ENCODE measurements at regions of chr6 and their contacts with region 1.

Region 1: GRCh38 chr6:158026054-158026900 is 44.6 kb downstream of the SYNJ2 start:
- DNase-seq: peak; percentile 79
- H3K4me3 ChIP-seq: 0 out of 4 replicates have a peak overlapping the region, but pooled peaks of 1 of the 2 experiments have one; percentile 0
- H3K27ac ChIP-seq: peak overlapping the region; percentile 56 to 96
- H3K4me1 ChIP-seq: peaks cover 15 to 30% of the 10 kb centered on the region in 2 experiments; a peak in 3 of 4 replicates
- H3K27me3 ChIP-seq: no peaks in the 10 kb centered on the region
- CTCF ChIP-seq: peak; percentile 83
- EP300 ChIP-seq: peak in 1 of 2 experiments; percentile 97; a peak in 2 of 4 replicates
- RAD21 ChIP-seq: peak; percentile 35

Region 2: GRCh38 chr6:158014505-158015187 is 11.6 kb before region 1 on chr6:
- CTCF ChIA-PET with region 1: interaction called, 10 read pairs
- POLR2A ChIA-PET with region 1: no interaction called
- DNase-seq: no peak
- H3K4me3 ChIP-seq: no peak overlapping the region
- H3K27ac ChIP-seq: peak overlapping the region in 1 of 2 experiments; percentile 38; a peak in 2 of 4 replicates
- H3K4me1 ChIP-seq: peaks cover 4 to 32% of the 10 kb centered on the region in 2 experiments; a peak in 3 of 4 replicates
- H3K27me3 ChIP-seq: no peaks in the 10 kb centered on the region
- CTCF ChIP-seq: no peak
- EP300 ChIP-seq: no peak
- RAD21 ChIP-seq: no peak